ENCODE measurements at regions of chr19 and their contacts with region 1.

Region 1: GRCh38 chr19:39788244-39788643 is 9.6 kb downstream of the LEUTX start:
- DNase-seq: no peak
- H3K4me3 ChIP-seq: no peak overlapping the region
- H3K27ac ChIP-seq: no peak overlapping the region
- H3K4me1 ChIP-seq: no peaks in the 10 kb centered on the region
- H3K27me3 ChIP-seq: peaks cover 0 to 11% of the 10 kb centered on the region in 2 donors
- CTCF ChIP-seq: no peak
- POLR2A ChIP-seq: no peak

Region 2: DNA sequence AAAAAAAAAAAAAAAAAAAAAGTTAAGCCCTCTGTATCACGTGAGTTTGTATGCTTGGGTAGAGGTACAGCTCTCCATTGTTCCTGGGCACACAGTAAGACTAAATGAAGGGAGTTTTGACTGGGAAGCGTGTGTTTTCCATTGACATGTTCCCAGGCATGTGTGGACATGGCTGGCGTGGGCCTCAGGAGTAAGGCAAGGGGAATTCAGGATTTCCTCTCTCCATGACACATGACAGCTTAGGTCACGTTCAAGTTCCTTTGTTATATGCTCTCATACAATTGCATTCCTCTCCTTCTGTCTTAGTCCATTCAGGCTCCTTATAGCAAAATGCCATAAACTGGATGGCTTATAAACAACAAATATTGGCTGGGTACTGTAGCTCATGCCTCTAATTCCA is 385.8 kb after region 1 on chr19:
- intact Hi-C with region 1: loop called (anchors 5 kb)
- DNase-seq: no peak
- H3K4me3 ChIP-seq: no peak overlapping the region
- H3K27ac ChIP-seq: no peak overlapping the region
- H3K4me1 ChIP-seq: no peaks in the 10 kb centered on the region
- H3K27me3 ChIP-seq: no peaks in the 10 kb centered on the region
- CTCF ChIP-seq: no peak
- POLR2A ChIP-seq: no peak

Measured in breast epithelium (tissue), 4 donors.